Activated T-helper 1 cell treated with anti-CD3 and anti-CD28 coated beads, Interleukin-12 subunit alpha, Interleukin-12 subunit beta, Interleukin-2, Interleukin-4 antibody, amounts not matched to agents 30 ng/mL and 10 ng/mL and 1 ng/mL, durations not matched to agents 14 hours and 24 hours and 36 hours (primary cell): ENCODE measurements at regions of chr18 and their contacts with region 1.

Region 1: DNA sequence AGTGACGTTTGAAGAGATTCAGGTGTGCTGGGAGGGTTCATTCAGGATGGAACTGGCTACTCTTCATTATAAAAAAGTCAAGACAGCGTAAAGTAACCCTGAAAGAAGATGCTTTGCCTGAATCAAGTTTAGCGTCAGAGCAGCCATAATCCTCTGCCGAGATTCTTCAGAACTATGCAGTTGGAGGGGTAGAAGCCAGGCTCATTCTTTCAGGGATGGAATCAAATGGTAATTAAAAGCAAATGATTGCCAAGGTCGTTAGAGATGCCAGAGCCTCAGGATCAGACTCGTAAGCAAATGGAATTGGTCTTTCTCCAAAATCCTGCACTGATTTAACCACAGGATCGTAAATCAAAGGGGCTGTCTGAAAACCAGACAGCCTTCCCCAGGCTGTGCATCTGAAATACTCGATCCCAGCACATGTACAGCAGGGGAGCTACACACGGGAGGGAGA is 21.9 kb downstream of the APCDD1 start:
- DNase-seq: no peak
- H3K4me3 Mint-ChIP-seq: no peak overlapping the region
- H3K27ac Mint-ChIP-seq: no peak overlapping the region
- H3K4me1 Mint-ChIP-seq: no peaks in the 10 kb centered on the region
- H3K27me3 Mint-ChIP-seq: peaks cover 19% of the 10 kb centered on the region

Region 2: GRCh38 chr18:10525371-10526210 is 49.2 kb after region 1 on chr18 and contains the start of gene NAPG:
- intact Hi-C with region 1: no loop called
- DNase-seq: peak; percentile 91
- H3K4me3 Mint-ChIP-seq: peak within 1 kb of the TSS; percentile 97
- H3K27ac Mint-ChIP-seq: peak within 1 kb of the TSS; percentile 98
- H3K4me1 Mint-ChIP-seq: peaks cover 63% of the 10 kb centered on the region
- H3K27me3 Mint-ChIP-seq: peaks cover 7% of the 10 kb centered on the region
- total RNA-seq, gene NAPG: 37.4 and 40.3 TPM in 2 replicates

Region 3: GRCh38 chr18:11237066-11237465 is 760.7 kb after region 1 on chr18:
- intact Hi-C with region 1: loop called (anchors 10 kb)
- DNase-seq: no peak
- H3K4me3 Mint-ChIP-seq: no peak overlapping the region
- H3K27ac Mint-ChIP-seq: no peak overlapping the region
- H3K4me1 Mint-ChIP-seq: no peaks in the 10 kb centered on the region
- H3K27me3 Mint-ChIP-seq: no peaks in the 10 kb centered on the region